ENCODE measurements at regions of chr11 and their contacts with region 1.

Region 1: DNA sequence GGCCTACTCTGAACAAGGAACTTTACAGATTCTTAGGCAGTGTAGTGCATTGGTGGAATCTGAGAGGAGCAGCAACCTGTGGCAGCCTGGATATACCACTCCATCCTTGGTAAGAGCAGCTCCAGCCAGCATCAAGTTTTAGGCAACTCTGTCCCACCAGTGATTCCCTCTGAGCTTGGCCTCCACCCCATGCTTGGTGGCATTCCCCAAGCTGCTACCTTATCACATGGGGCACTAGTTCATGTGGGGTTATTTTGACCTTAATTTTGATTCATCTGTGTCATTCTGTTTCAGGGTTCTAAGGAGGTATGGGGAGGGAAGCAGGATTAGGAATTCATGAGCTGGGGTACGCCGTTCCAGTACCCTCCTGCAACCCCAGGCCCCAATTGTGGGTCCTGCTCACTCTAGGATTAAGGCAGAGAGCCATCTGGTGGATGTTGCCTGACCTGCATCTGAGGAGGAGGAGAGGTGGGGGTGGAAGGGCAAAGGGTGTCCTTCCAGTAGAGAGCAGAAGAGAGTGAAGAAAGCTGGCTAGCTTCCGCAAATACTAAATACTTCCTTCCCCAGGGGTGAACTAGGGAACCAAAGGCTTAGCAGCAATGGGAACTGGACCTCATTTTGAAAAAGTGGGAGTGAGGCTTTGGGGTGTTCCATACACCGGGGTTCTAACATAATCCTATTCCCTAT is 10.5 kb downstream of the LRRC51 start:
- DNase-seq: peak; percentile 67 to 84
- ATAC-seq: peak; percentile 94 to 95
- H3K4me3 ChIP-seq: no peak overlapping the region
- H3K27ac ChIP-seq: peak overlapping the region in 1 of 2 experiments; percentile 29; a peak in 2 of 6 replicates
- H3K4me1 ChIP-seq: peaks cover 6% of the 10 kb centered on the region
- CTCF ChIP-seq: peak; percentile 86
- EP300 ChIP-seq: no peak
- POLR2A ChIP-seq: no peak
- RAD21 ChIP-seq: peak; percentile 75 to 83

Region 2: GRCh38 chr11:72040726-72041441 is 50.3 kb before region 1 on chr11:
- CTCF ChIA-PET with region 1: interaction called, 20 read pairs
- POLR2A ChIA-PET with region 1: no interaction called
- DNase-seq: peak; percentile 88 to 90
- ATAC-seq: peak; percentile 82 to 83
- H3K4me3 ChIP-seq: peak overlapping the region; percentile 64
- H3K27ac ChIP-seq: peak overlapping the region; percentile 93
- H3K4me1 ChIP-seq: peaks cover 36% of the 10 kb centered on the region
- CTCF ChIP-seq: no peak
- EP300 ChIP-seq: no peak
- POLR2A ChIP-seq: no peak
- RAD21 ChIP-seq: no peak

Region 3: GRCh38 chr11:72058416-72059034 is 32.6 kb before region 1 on chr11:
- CTCF ChIA-PET with region 1: interaction called, 10 read pairs
- POLR2A ChIA-PET with region 1: no interaction called
- DNase-seq: no peak
- ATAC-seq: no peak; a peak in 1 of 6 replicates
- H3K4me3 ChIP-seq: no peak overlapping the region
- H3K27ac ChIP-seq: no peak overlapping the region
- H3K4me1 ChIP-seq: no peaks in the 10 kb centered on the region
- CTCF ChIP-seq: no peak
- EP300 ChIP-seq: no peak
- POLR2A ChIP-seq: no peak
- RAD21 ChIP-seq: no peak

Region 4: GRCh38 chr11:72069787-72070251 is 21.3 kb before region 1 on chr11:
- CTCF ChIA-PET with region 1: interaction called, 40 read pairs
- POLR2A ChIA-PET with region 1: no interaction called
- DNase-seq: peak; percentile 59 to 78
- ATAC-seq: peak; percentile 99
- H3K4me3 ChIP-seq: no peak overlapping the region
- H3K27ac ChIP-seq: peak overlapping the region; percentile 58 to 86
- H3K4me1 ChIP-seq: peaks cover 55% of the 10 kb centered on the region
- CTCF ChIP-seq: no peak
- EP300 ChIP-seq: no peak
- POLR2A ChIP-seq: peak; percentile 28; the same call in 1 of the 2 replicates
- RAD21 ChIP-seq: no peak

Region 5: DNA sequence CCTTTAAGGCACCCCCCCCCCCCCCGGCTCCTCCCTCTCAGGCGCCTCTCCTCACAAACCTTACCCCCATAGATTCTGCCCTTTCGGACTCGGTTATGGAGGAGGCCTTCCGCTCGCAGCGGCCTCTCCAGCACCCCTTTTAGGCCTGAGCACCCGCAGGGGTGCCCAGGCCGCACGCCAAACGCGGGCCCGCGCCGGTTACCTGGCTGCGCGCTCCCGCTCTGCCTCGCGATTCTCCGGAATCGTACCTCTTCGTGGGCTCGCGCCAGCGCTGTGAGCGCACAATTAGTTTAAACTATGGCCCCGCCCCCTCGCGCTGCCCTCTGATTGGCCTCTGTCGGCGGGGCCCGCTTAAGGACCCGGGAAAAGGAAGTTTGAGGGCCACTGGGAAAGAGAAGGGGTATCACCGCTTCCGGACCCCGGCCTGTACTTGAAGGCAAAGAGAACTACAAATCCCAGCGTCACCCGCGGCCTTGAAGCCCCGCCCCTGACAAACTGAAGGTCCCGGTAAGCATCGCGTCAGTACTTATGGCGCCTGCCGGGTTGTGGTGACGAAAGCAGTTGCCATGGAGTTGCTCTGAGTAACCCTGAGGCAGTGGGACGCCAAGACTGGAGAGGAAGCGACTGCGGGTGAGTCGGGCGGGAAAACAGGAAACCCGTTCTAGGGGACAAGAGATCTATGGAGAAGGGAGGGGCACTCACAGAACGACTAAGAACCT is 10.7 kb before region 1 on chr11 and contains the starts of genes LRRC51 and NUMA1:
- CTCF ChIA-PET with region 1: interaction called, 50 read pairs
- POLR2A ChIA-PET with region 1: interaction called, 3 read pairs
- DNase-seq: peak; percentile 91 to 100
- ATAC-seq: peak; percentile 96 to 97
- H3K4me3 ChIP-seq: peak within 1 kb of the TSS; percentile 85
- H3K27ac ChIP-seq: peak within 1 kb of the TSS; percentile 90
- H3K4me1 ChIP-seq: peaks cover 19% of the 10 kb centered on the region
- CTCF ChIP-seq: no peak
- EP300 ChIP-seq: no peak
- POLR2A ChIP-seq: peak; percentile 54
- RAD21 ChIP-seq: no peak
- polyA plus RNA-seq, gene LRRC51: 14.3 and 16.3 TPM in 2 replicates
- polyA plus RNA-seq, gene NUMA1: 51.5 and 64.6 TPM in 2 replicates

Region 6: GRCh38 chr11:72102946-72103753 is 12.0 kb after region 1 on chr11 and contains the start of gene LAMTOR1:
- CTCF ChIA-PET with region 1: interaction called, 46 read pairs
- POLR2A ChIA-PET with region 1: interaction called, 3 read pairs
- DNase-seq: peak; percentile 90 to 99
- ATAC-seq: peak; percentile 87 to 96
- H3K4me3 ChIP-seq: peak within 1 kb of the TSS; percentile 94
- H3K27ac ChIP-seq: peak within 1 kb of the TSS; percentile 93 to 94
- H3K4me1 ChIP-seq: peaks cover 14% of the 10 kb centered on the region
- CTCF ChIP-seq: no peak
- EP300 ChIP-seq: 0 out of 5 replicates have a peak, but pooled peaks of 1 of the 2 experiments have one; percentile 26
- POLR2A ChIP-seq: peak; percentile 49
- RAD21 ChIP-seq: no peak
- polyA plus RNA-seq, gene LAMTOR1: 66.1 and 85.8 TPM in 2 replicates

Region 7: GRCh38 chr11:72123117-72123653 is 32.0 kb after region 1 on chr11:
- CTCF ChIA-PET with region 1: no interaction called
- POLR2A ChIA-PET with region 1: no interaction called
- DNase-seq: no peak
- ATAC-seq: no peak
- H3K4me3 ChIP-seq: no peak overlapping the region
- H3K27ac ChIP-seq: no peak overlapping the region
- H3K4me1 ChIP-seq: no peaks in the 10 kb centered on the region
- CTCF ChIP-seq: no peak
- EP300 ChIP-seq: no peak
- POLR2A ChIP-seq: no peak
- RAD21 ChIP-seq: no peak

Region 8: DNA sequence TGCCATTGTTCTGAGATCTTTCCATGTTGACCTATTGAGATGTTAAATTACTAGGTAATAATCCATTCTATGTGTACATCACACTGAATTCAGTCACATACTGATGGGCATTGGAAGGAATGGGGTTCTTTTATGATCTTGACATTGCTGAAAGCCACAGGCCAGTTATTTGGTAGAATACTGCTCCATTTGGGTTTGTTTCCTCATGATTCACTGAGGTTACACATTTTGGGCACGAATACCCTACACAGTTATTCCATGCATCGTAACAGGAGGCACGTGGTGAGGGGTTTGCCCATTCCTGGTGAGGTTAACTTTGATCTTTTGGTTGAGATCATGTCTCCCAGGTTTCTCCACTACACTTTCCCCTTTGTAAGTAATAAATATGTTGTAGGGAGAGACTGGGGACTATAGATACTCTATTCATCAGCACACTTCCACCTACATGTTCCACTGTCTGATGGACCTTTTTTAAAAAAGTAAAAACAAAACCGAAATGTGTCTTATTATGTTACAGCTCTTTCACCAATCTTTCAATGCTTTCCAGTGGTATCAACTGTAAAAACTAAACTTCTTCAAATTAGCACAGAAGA is 88.8 kb after region 1 on chr11:
- CTCF ChIA-PET with region 1: interaction called, 17 read pairs
- POLR2A ChIA-PET with region 1: no interaction called
- DNase-seq: no peak
- ATAC-seq: no peak
- H3K4me3 ChIP-seq: no peak overlapping the region
- H3K27ac ChIP-seq: no peak overlapping the region
- H3K4me1 ChIP-seq: peaks cover 11% of the 10 kb centered on the region; the same call in 2 of the 3 replicates
- CTCF ChIP-seq: no peak
- EP300 ChIP-seq: no peak
- POLR2A ChIP-seq: no peak
- RAD21 ChIP-seq: no peak

Measured in A549 (cell line).